Natural killer cell (primary cell): ENCODE measurements at regions of chr18 and their contacts with region 1.

Region 1: GRCh38 chr18:45974088-45974536 is 7.0 kb upstream of the EPG5 start:
- DNase-seq: peak; percentile 57 to 82
- ATAC-seq: peak; percentile 90 to 97 (median 96)
- H3K4me3 ChIP-seq: no peak overlapping the region
- H3K4me3 Mint-ChIP-seq: no peak overlapping the region
- H3K27ac ChIP-seq: no peak overlapping the region
- H3K27ac Mint-ChIP-seq: no peak overlapping the region
- H3K4me1 ChIP-seq: no peaks in the 10 kb centered on the region
- H3K4me1 Mint-ChIP-seq: peaks cover 0 to 7% of the 10 kb centered on the region in 2 donors
- H3K27me3 ChIP-seq: no peaks in the 10 kb centered on the region
- H3K27me3 Mint-ChIP-seq: no peaks in the 10 kb centered on the region
- CTCF ChIP-seq: peak; percentile 83

Region 2: GRCh38 chr18:45621061-45621511 is 353.0 kb before region 1 on chr18:
- intact Hi-C with region 1: loop called (anchors 1 kb)
- DNase-seq: peak; percentile 18 to 69
- ATAC-seq: peak; percentile 61 to 84 (median 76)
- H3K4me3 ChIP-seq: no peak overlapping the region
- H3K4me3 Mint-ChIP-seq: no peak overlapping the region
- H3K27ac ChIP-seq: no peak overlapping the region
- H3K27ac Mint-ChIP-seq: no peak overlapping the region
- H3K4me1 ChIP-seq: no peaks in the 10 kb centered on the region
- H3K4me1 Mint-ChIP-seq: peaks cover 0 to 6% of the 10 kb centered on the region in 2 donors
- H3K27me3 ChIP-seq: no peaks in the 10 kb centered on the region
- H3K27me3 Mint-ChIP-seq: peaks cover 17 to 23% of the 10 kb centered on the region in 2 donors
- CTCF ChIP-seq: peak; percentile 94

Region 3: DNA sequence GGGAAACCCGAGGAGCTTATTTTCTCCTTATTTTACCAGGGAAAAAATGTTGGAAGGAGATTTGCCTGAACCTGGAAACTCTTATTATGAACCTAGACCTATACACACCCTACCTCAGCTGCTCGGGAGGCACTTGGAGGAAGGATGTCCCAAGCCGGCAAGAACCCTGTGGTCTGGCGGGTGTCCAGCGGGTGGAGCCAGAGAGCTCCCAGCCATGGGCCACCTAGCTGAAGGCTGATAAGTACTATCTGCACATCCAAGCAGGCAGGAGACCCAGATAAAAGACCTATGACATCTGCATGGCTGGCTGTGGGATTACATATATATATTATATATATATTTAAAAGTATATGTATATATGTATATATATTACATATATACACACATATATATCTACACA is 251.2 kb before region 1 on chr18:
- intact Hi-C with region 1: loop called (anchors 1 kb)
- DNase-seq: peak; percentile 60 to 69
- ATAC-seq: peak; percentile 81 to 99 (median 99)
- H3K4me3 ChIP-seq: no peak overlapping the region
- H3K4me3 Mint-ChIP-seq: no peak overlapping the region
- H3K27ac ChIP-seq: no peak overlapping the region
- H3K27ac Mint-ChIP-seq: no peak overlapping the region
- H3K4me1 ChIP-seq: no peaks in the 10 kb centered on the region
- H3K4me1 Mint-ChIP-seq: no peaks in the 10 kb centered on the region
- H3K27me3 ChIP-seq: no peaks in the 10 kb centered on the region
- H3K27me3 Mint-ChIP-seq: no peaks in the 10 kb centered on the region
- CTCF ChIP-seq: peak; percentile 70

Region 4: GRCh38 chr18:45896991-45897390 is 77.1 kb before region 1 on chr18:
- intact Hi-C with region 1: no loop called
- DNase-seq: no peak
- ATAC-seq: no peak
- H3K4me3 ChIP-seq: no peak overlapping the region
- H3K4me3 Mint-ChIP-seq: no peak overlapping the region
- H3K27ac ChIP-seq: no peak overlapping the region
- H3K27ac Mint-ChIP-seq: peak overlapping the region in 1 of 2 donors; percentile 20
- H3K4me1 ChIP-seq: no peaks in the 10 kb centered on the region
- H3K4me1 Mint-ChIP-seq: peaks cover 13 to 29% of the 10 kb centered on the region in 2 donors
- H3K27me3 ChIP-seq: no peaks in the 10 kb centered on the region
- H3K27me3 Mint-ChIP-seq: no peaks in the 10 kb centered on the region
- CTCF ChIP-seq: no peak

Region 5: DNA sequence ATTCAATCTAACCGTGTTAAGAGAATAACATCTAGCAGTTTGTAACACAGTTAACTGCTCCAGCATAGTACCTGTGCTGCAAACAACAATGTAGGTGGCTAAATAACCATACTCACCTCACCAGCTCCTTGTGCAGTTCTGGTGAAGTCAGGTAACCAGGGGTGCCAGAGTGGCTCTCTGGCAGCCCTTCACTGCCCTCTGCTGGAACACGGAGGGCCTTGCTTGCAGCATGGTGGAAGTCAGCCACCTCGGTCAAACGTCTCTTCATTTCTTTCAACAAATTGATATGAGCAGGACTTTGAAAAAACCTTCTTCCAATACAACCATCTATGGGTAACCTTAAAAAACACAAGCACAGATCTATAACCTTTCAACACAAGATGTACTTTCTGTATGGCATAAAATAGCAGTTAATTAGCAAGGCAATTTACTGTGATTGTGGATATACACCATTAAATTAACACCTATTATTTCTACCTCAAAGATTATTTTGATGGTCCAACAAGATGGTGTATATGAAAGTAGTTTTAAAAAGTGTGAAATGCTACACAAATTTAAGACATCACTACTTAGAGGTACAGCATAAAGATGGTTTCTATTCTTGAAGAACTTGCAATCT is 63.6 kb before region 1 on chr18:
- intact Hi-C with region 1: loop called (anchors 1 kb)
- DNase-seq: peak; percentile 44 to 75
- ATAC-seq: peak; percentile 82 to 94 (median 83)
- H3K4me3 ChIP-seq: no peak overlapping the region
- H3K4me3 Mint-ChIP-seq: no peak overlapping the region
- H3K27ac ChIP-seq: no peak overlapping the region
- H3K27ac Mint-ChIP-seq: peak overlapping the region in 1 of 2 donors; percentile 34
- H3K4me1 ChIP-seq: no peaks in the 10 kb centered on the region
- H3K4me1 Mint-ChIP-seq: peaks cover 0 to 5% of the 10 kb centered on the region in 2 donors
- H3K27me3 ChIP-seq: no peaks in the 10 kb centered on the region
- H3K27me3 Mint-ChIP-seq: no peaks in the 10 kb centered on the region
- CTCF ChIP-seq: peak; percentile 82

Region 6: GRCh38 chr18:45938488-45938935 is 35.6 kb before region 1 on chr18:
- intact Hi-C with region 1: loop called (anchors 2 kb)
- DNase-seq: peak in 1 of 2 donors; percentile 72
- ATAC-seq: peak; percentile 79 to 92 (median 91)
- H3K4me3 ChIP-seq: no peak overlapping the region
- H3K4me3 Mint-ChIP-seq: peak overlapping the region; percentile 83
- H3K27ac ChIP-seq: peak overlapping the region; percentile 79
- H3K27ac Mint-ChIP-seq: peak overlapping the region; percentile 86 to 89
- H3K4me1 ChIP-seq: peaks cover 19% of the 10 kb centered on the region
- H3K4me1 Mint-ChIP-seq: peaks cover 47 to 51% of the 10 kb centered on the region in 2 donors
- H3K27me3 ChIP-seq: no peaks in the 10 kb centered on the region
- H3K27me3 Mint-ChIP-seq: no peaks in the 10 kb centered on the region
- CTCF ChIP-seq: no peak

Region 7: DNA sequence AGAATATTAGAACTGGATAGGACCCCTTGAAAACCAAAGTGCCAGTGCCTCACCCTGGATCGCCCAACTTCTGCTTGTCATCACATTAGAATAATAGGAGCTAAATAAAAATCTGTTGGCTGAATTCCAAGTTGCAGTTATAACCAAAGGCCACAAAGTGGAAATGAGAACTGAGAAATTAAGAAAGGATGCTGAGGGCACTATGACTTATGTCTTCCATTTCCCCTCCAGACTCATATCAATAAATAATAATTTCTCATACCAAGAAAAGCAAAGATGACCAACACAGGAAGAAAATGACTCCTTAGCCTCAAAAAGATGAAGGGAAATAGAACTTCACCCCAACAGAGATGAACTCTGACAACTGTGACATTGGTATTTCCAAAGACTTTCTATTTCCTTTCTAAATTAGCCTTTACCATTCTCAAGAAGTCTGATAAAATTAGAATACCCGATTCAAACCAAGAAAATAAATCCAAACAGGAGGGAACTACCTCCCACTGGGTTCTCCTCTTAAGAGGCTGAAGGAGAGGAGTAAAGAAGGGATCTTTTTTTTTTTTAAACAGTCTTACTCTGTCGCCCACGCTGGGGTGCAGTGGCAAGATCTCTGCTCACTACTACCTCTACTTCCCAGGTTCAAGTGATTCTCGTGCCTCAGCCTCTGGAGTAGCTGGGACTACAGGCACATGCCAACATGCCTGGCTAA is 39.5 kb after region 1 on chr18:
- intact Hi-C with region 1: no loop called
- DNase-seq: no peak
- ATAC-seq: no peak
- H3K4me3 ChIP-seq: no peak overlapping the region
- H3K4me3 Mint-ChIP-seq: no peak overlapping the region
- H3K27ac ChIP-seq: no peak overlapping the region
- H3K27ac Mint-ChIP-seq: no peak overlapping the region
- H3K4me1 ChIP-seq: peaks cover 5% of the 10 kb centered on the region
- H3K4me1 Mint-ChIP-seq: peaks cover 12 to 18% of the 10 kb centered on the region in 2 donors
- H3K27me3 ChIP-seq: no peaks in the 10 kb centered on the region
- H3K27me3 Mint-ChIP-seq: no peaks in the 10 kb centered on the region
- CTCF ChIP-seq: no peak

Region 8: GRCh38 chr18:46028536-46028891 is 54.4 kb after region 1 on chr18:
- intact Hi-C with region 1: no loop called
- DNase-seq: no peak
- ATAC-seq: no peak
- H3K4me3 ChIP-seq: peak overlapping the region; percentile 75
- H3K4me3 Mint-ChIP-seq: peak overlapping the region; percentile 97
- H3K27ac ChIP-seq: no peak overlapping the region
- H3K27ac Mint-ChIP-seq: peak overlapping the region; percentile 83 to 87
- H3K4me1 ChIP-seq: peaks cover 14% of the 10 kb centered on the region
- H3K4me1 Mint-ChIP-seq: peaks cover 14 to 20% of the 10 kb centered on the region in 2 donors
- H3K27me3 ChIP-seq: peaks cover 2% of the 10 kb centered on the region
- H3K27me3 Mint-ChIP-seq: peaks cover 0 to 4% of the 10 kb centered on the region in 2 donors
- CTCF ChIP-seq: no peak